PC-9 (cell line): ENCODE measurements at regions of chr6 and their contacts with region 1.

Region 1: DNA sequence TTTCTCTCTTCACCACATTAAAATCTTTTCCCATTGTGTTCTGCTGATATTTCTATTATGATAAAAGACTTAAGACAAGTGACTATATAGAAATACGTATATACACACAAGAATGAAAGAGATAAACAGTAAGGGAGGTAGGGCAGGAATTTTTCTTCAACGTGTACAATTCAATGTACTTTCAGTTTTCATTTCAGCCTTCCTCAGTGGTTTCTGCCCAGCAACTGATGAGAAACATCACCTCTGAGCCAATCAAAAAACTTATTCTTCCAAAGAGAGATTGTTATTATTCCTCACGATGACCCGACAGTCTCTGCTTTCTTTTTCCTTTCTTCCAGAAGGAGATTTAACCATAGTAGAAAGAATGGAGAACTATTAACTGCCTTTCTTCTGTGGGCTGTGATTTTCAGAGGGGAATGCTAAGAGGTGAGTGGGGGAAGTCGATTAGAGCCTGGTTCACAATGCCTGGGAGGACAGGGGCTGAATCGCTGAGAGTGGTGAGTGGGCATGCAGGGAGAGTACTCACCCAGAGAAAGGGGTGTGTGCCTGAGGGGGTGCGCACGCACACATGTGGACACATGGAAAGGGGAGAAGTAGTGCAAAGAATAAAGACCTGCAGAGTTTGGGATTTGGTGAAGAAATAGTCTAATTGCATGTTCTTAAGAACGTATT is at the start of gene BTN3A1:
- DNase-seq: peak; percentile 69 to 73
- H3K4me3 ChIP-seq: peak within 1 kb of the TSS; percentile 72
- H3K27ac ChIP-seq: peak within 1 kb of the TSS; percentile 67
- H3K4me1 ChIP-seq: peaks cover 14% of the 10 kb centered on the region
- H3K27me3 ChIP-seq: no peaks in the 10 kb centered on the region
- CTCF ChIP-seq: no peak
- total RNA-seq, gene BTN3A1: 28.3 and 30.4 TPM in 2 replicates

Region 2: GRCh38 chr6:26365633-26365995 is 36.5 kb before region 1 on chr6:
- CTCF ChIA-PET with region 1: no interaction called
- POLR2A ChIA-PET with region 1: no interaction called
- intact Hi-C with region 1: loop called (anchors 1 kb)
- DNase-seq: no peak
- H3K4me3 ChIP-seq: peak overlapping the region; percentile 60
- H3K27ac ChIP-seq: peak overlapping the region; percentile 70; the same call in 1 of the 2 replicates
- H3K4me1 ChIP-seq: peaks cover 19% of the 10 kb centered on the region
- H3K27me3 ChIP-seq: no peaks in the 10 kb centered on the region
- CTCF ChIP-seq: no peak

Region 3: GRCh38 chr6:26439657-26440056 is 37.5 kb after region 1 on chr6:
- CTCF ChIA-PET with region 1: no interaction called
- POLR2A ChIA-PET with region 1: no interaction called
- intact Hi-C with region 1: loop called (anchors 5 kb)
- DNase-seq: no peak
- H3K4me3 ChIP-seq: peak overlapping the region; percentile 67
- H3K27ac ChIP-seq: peak overlapping the region; percentile 39
- H3K4me1 ChIP-seq: peaks cover 8% of the 10 kb centered on the region
- H3K27me3 ChIP-seq: no peaks in the 10 kb centered on the region
- CTCF ChIP-seq: no peak